Posterior cingulate gyrus (tissue), 11 donors: ENCODE measurements at regions of chr1 and their contacts with region 1.

Region 1: GRCh38 chr1:11838349-11839272 is 9.0 kb downstream of the NPPA start:
- DNase-seq: peak; percentile 54 to 97 (median 81)

Region 2: GRCh38 chr1:11893907-11894251 is 55.3 kb after region 1 on chr1:
- intact Hi-C with region 1: loop called (anchors 1 kb)
- DNase-seq: peak in 8 of 10 donors; percentile 51 to 94 (median 64)

Region 3: DNA sequence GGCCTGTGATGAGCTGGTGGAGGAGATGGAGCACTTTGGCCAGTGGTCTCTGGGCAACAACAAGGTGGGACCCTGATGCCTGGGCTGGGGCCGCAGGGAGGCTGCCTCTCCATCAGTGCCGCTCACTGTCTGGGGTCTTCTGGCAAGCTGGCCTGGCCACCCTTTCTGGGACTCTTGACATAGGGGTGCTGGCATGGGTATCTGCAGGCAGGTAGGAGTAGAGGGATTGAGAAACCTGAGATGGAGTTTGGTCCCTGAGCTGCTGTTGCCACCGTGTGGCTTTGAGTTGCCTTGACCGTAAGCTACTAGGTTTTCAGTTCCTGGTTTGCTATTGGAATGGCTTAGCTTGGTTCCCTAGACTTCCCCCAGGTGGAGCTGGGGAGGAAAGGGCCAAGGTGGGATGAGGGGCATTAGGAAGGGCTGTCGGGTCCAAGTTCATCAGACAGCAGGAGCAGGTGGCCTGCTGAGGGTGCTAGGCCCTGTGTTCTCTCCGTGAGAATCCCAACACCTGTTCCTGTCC is 128.5 kb after region 1 on chr1:
- intact Hi-C with region 1: loop called (anchors 10 kb)
- DNase-seq: no peak